AG04449 (cell line): ENCODE measurements at regions of chr4 and their contacts with region 1.

Region 1: DNA sequence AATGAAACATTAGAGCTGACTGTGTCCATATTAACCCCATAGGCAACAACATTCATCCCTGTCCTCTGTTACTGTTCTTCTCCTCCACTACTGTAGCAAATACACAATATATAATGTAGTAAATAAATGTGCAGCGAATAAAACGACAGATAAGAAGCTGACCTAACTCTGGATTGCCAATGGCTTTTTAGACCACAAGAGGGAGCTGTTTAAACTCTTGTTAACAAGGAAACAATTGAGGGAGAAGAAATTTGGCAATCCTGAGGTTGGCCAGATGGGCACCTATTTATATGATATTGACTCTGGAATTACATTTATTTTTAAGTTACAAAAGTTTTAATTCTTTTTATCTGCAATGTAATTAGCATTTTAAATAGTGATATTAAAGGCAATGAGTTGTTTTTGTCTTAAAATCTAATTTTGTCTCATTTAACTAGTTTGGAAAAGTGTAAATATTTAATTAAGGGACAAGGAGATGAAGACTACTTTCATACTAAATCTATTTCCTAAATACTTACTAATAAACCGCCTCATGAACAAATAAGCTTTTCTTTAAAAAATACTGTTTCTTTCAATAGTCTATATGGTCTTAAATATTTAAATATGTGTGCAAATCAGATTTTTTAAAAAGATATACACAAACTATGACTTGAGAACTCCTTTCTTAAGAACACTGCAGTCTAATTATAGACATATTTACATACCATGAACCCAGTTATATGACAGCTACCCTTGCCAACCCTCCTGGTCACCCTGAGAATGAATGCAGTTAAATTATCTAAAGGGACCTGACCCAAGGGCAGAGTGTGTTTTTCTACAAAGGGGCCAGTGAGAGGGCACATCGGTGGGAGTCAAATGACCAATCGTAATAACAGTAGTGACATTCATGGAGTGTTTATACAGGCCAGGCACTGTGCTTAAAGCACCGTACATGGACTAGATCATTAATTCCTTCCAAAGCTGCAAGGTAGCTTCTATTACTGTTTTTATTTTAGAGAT is 52.9 kb upstream of the HPF1 start:
- DNase-seq: peak; percentile 52
- H3K4me3 ChIP-seq: no peak overlapping the region
- CTCF ChIP-seq: peak; percentile 57

Region 2: DNA sequence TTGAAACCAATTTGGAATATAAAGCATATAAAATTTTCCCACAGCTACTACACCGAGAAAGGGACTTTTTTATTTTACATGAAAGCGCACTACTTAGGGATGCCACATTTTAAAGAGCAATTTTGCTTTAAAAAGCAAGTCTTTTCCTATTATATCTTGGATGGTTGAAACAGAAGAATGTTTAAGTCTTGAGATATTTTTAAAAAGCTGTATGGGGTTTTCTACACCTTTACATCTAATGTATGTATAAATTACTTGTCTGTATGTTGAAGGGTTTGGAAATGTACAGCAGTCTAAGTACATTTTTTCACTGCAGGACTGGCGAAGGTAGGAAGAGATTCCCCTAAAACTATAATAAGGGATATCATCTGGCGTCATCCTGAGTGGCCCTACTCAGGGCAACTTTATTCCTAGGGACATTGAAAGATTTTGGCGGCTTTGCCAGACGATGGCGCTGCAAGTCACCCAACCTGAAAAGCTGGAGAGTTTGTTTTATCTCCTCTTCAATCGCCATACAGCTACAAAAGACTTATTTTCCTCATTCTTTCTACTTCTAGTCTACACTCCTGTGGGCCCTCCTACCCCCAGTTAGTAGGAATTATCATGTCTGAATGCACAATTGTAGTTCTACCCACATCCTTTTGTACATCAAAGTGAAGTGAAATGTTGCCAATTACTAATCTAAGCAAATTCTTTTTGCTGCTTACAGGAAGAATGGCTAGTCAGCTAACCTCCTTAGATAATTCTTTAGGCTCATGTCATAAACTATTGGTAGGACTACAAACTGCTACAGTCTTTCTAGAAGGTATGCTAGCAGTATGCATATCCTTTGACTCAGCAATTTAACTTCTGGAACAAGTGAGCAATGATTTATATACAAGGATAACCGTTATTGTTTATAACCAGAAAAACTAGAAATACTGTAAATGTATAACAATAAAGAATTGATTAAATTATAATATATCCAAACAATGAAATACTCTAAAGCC is 197.5 kb before region 1 on chr4:
- CTCF ChIA-PET with region 1: interaction called, 27 read pairs
- POLR2A ChIA-PET with region 1: no interaction called
- DNase-seq: no peak
- H3K4me3 ChIP-seq: peak overlapping the region; percentile 90
- CTCF ChIP-seq: peak; percentile 69

Region 3: GRCh38 chr4:169823685-169824084 is 13.1 kb after region 1 on chr4:
- CTCF ChIA-PET with region 1: interaction called, 20 read pairs
- POLR2A ChIA-PET with region 1: no interaction called
- DNase-seq: no peak
- H3K4me3 ChIP-seq: no peak overlapping the region
- CTCF ChIP-seq: no peak

Region 4: DNA sequence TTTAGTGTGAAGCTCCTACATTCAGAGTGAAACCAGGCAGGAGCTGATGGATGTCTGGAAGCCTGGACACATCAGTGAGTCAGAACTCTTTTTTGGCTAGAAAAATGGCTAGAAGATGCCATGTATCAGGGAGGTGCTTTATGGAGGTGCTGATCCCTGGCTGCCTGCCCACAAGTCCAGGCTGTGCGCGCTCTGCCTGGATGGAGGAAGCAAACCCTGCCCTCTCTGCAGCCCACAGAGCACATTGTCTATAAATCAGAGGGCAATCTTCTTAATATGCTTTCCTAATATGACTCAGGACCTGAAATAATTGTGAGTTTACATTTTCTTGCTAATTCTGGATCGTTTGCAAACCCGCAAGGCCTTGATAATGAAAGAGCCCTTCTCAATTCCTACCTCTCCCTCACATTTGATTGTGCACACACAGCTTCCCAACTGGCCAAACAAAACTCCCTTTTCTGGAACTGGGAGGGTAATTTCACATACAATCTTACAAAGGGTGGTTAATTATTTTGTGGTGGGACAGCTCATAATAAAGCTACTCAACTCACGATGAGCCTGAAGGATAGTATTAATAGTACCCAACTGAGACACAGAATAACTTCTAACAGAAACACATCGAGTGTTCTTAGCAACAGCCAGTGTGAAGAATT is 203.9 kb after region 1 on chr4:
- CTCF ChIA-PET with region 1: interaction called, 22 read pairs
- POLR2A ChIA-PET with region 1: no interaction called
- DNase-seq: peak; percentile 28
- H3K4me3 ChIP-seq: no peak overlapping the region
- CTCF ChIP-seq: no peak

Region 5: GRCh38 chr4:170033999-170034398 is 223.4 kb after region 1 on chr4:
- CTCF ChIA-PET with region 1: interaction called, 89 read pairs
- POLR2A ChIA-PET with region 1: no interaction called
- DNase-seq: no peak
- H3K4me3 ChIP-seq: no peak overlapping the region
- CTCF ChIP-seq: no peak

Region 6: GRCh38 chr4:170047771-170048354 is 237.2 kb after region 1 on chr4:
- CTCF ChIA-PET with region 1: interaction called, 187 read pairs
- POLR2A ChIA-PET with region 1: no interaction called
- DNase-seq: peak; percentile 21
- H3K4me3 ChIP-seq: no peak overlapping the region
- CTCF ChIP-seq: peak; percentile 48

Region 7: GRCh38 chr4:170089668-170090351 is 279.2 kb after region 1 on chr4 and contains the start of gene AADAT:
- CTCF ChIA-PET with region 1: interaction called, 25 read pairs
- POLR2A ChIA-PET with region 1: no interaction called
- DNase-seq: no peak
- H3K4me3 ChIP-seq: peak within 1 kb of the TSS; percentile 78
- CTCF ChIP-seq: peak; percentile 83